ENCODE measurements at regions of chr11 and their contacts with region 1.

Region 1: DNA sequence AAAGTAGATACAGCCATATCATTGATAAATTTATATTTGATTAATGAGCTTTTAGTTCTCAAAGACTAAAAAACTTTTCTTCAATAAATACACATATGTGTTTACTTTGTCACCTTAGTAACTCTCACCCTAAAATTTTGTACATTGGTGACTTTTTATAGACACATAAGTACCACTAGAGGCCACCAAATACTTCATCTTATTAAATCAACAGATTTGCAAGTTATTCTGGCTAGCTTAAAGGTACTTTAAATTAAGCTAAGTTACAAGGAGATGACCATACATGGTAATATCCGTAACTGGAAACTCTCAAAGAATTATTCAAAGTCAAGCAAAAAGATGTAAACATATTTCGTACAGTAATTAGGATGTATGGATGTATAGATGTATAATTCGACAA is 112.2 kb downstream of the SBF2 start:
- DNase-seq: no peak
- ATAC-seq: peak; percentile 24
- H3K4me3 Mint-ChIP-seq: no peak overlapping the region
- H3K27ac Mint-ChIP-seq: no peak overlapping the region
- H3K4me1 Mint-ChIP-seq: no peaks in the 10 kb centered on the region
- H3K27me3 Mint-ChIP-seq: no peaks in the 10 kb centered on the region
- CTCF ChIP-seq: no peak

Region 2: DNA sequence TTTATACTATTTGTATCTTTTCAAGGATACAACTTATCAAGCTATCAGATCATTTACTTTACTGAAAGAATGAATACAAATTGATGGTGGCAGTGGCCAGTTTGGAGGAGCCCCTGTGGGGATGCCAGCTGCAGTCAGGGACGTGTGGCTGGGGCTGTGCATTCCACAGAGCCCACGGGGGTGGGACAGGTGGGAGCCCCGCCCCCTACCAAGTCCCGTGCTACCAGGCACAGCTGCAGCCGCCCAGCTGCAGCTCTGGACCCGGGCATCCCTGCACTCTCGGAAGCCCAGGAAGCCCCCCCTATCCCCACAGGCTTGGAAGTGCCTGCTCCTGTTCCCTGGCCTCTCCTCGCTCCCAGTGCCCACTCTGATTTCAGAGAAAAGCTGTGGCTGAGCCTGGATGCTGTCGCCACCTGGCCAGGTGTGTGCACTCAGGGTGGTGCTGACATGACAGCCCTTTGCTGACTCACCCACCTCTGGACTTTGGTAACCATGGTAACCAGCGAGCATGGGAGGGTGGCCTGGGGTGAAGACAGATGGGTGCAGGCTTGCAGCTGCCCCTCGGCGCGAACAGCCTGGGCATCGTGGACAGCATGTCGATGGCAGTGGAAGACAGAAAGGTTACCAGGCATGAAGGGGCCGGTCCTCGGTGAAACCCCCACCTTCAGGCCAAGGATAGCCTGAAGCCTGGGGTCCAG is 25.9 kb before region 1 on chr11:
- CTCF ChIA-PET with region 1: no interaction called
- POLR2A ChIA-PET with region 1: no interaction called
- intact Hi-C with region 1: no loop called
- DNase-seq: no peak
- ATAC-seq: no peak
- H3K4me3 Mint-ChIP-seq: no peak overlapping the region
- H3K27ac Mint-ChIP-seq: no peak overlapping the region
- H3K4me1 Mint-ChIP-seq: peaks cover 3% of the 10 kb centered on the region
- H3K27me3 Mint-ChIP-seq: no peaks in the 10 kb centered on the region
- CTCF ChIP-seq: no peak

Region 3: DNA sequence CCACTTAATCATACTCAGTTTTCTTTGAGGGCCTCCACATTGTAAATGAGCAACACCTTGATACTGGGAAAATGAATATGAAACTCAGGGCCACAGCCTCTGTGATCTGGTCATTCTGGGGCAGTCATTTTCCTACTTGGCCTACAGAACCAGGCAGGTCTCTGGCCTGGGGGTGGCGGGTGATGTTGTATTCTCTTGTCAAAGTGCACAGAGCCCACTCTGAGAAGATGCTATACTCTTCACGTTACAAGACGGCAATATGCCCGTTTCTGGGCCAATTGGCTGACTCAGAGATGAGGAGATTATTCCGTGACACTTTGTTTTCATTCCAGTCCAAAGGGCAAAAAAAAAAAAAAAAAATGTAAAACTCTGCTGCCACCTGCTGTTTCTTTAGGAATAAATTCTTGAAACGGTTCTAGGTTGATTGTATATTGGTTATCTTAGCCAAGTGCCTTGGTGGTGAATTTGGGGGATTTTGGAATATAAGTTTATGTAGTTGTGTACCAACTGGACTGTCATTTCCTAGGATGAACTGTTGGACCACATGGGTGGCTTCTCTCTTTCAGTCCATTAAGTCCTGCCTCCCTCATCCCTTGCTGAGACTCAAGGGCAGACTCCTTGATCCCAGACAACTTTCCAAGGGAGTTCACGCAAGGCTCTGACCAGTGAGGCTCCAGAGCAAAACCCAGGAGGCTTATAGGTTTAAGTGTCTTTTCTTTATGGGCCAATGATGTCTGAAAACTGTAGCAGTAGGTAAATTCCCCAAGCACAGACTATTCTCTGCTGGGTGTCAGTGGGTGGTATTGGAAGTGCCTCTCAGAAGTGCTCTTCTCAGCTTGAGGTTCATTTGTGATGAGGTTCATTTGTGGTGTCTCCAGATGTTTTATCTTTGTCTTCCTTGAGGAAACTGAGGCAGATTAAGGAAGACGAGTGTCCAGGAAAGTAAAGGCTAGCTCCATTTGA is 141.3 kb after region 1 on chr11:
- CTCF ChIA-PET with region 1: interaction called, 14 read pairs
- POLR2A ChIA-PET with region 1: no interaction called
- intact Hi-C with region 1: no loop called
- DNase-seq: peak; percentile 73
- ATAC-seq: peak; percentile 78
- H3K4me3 Mint-ChIP-seq: peak overlapping the region; percentile 32
- H3K27ac Mint-ChIP-seq: peak overlapping the region; percentile 86
- H3K4me1 Mint-ChIP-seq: peaks cover 20% of the 10 kb centered on the region
- H3K27me3 Mint-ChIP-seq: peaks cover 7% of the 10 kb centered on the region
- CTCF ChIP-seq: peak; percentile 72

Measured in activated CD8-positive, alpha-beta T cell treated with anti-CD3 and anti-CD28 coated beads for 36 hours (primary cell).